ENCODE measurements at regions of chr6 and their contacts with region 1.

Region 1: DNA sequence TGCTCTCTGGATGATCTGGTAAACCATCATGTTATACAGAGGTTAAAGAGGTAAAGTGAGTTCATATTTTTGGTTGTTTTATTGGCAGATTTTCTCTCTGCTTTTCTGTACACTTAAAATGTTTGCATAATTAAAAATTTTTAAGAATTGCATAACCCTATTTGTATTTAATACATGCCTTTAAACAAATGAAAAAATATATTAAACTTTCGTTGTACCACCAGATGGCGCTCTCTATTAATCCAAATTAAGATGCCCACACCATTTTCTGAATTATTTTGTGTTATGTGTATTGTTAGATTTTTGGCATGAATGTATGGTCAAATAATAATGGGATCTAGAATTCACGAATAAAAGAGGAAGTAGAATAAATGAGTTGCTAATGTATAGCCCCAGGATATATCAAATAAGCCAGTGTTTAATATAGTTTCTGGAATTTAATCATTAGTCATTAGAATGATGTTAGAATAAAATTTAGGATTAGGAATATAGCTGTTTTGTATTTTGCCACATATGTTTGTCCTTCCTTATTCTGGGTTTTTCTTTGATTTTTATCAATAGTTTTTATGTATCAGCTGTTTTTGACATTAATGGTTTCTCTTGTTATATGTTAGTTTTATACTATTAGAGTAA is 38.9 kb downstream of the SMAP1 start:
- DNase-seq: no peak
- H3K4me3 ChIP-seq: no peak overlapping the region
- H3K27ac ChIP-seq: no peak overlapping the region
- H3K4me1 ChIP-seq: no peaks in the 10 kb centered on the region
- H3K27me3 ChIP-seq: no peaks in the 10 kb centered on the region
- CTCF ChIP-seq: peak in 3 of 4 experiments; percentile 67 to 77 (median 70)
- POLR2A ChIP-seq: no peak

Region 2: GRCh38 chr6:70633870-70634269 is 72.7 kb before region 1 on chr6:
- intact Hi-C with region 1: no loop called
- DNase-seq: no peak
- H3K4me3 ChIP-seq: no peak overlapping the region
- H3K27ac ChIP-seq: no peak overlapping the region
- H3K4me1 ChIP-seq: no peaks in the 10 kb centered on the region
- H3K27me3 ChIP-seq: no peaks in the 10 kb centered on the region
- CTCF ChIP-seq: no peak
- POLR2A ChIP-seq: no peak

Region 3: GRCh38 chr6:70884074-70884983 is 177.7 kb after region 1 on chr6:
- intact Hi-C with region 1: loop called (anchors 2 kb)
- DNase-seq: peak; percentile 54
- H3K4me3 ChIP-seq: no peak overlapping the region
- H3K27ac ChIP-seq: no peak overlapping the region
- H3K4me1 ChIP-seq: no peaks in the 10 kb centered on the region
- H3K27me3 ChIP-seq: no peaks in the 10 kb centered on the region
- CTCF ChIP-seq: peak; percentile 79 to 96 (median 88)
- POLR2A ChIP-seq: no peak

Region 4: DNA sequence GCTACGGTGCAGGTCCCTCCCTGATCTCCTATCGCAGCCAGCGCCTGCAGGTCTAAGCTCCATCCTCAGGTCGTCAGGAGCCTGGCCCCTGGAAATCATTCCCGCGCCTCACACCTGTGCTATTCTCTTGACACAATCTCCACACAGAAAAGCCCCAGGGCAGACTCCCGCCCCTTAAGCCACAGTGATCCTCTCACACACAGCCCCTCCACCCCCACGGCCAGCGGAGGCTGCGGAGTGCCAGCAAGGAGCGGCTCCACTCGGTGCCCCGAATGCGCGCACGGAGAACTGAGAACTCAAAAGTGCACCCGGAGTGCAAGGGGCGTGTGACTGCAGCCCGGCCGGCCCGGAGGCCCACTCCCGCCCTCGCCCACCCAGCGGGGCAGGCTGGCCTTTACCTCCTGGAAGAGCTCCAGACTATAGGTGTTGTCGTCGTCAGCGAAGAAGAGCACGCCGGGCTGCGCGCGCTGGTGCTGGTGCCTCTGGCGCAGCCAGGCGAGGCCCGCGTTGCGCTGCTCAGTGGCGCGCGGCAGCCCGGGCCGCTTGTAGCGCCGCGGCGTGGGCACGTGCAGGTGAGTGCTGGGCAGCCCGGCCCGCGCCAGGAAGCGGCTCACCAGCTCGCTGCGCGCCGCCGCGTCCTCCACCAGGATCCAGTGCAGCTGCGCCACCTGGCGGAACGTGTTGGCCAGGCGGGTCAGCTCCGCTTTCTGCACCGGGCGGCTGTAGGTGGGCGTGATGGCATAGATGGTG is 249.0 kb after region 1 on chr6:
- intact Hi-C with region 1: loop called (anchors 5 kb)
- DNase-seq: peak; percentile 83
- H3K4me3 ChIP-seq: peak overlapping the region; percentile 31 to 44
- H3K27ac ChIP-seq: no peak overlapping the region
- H3K4me1 ChIP-seq: peaks cover 5% of the 10 kb centered on the region
- H3K27me3 ChIP-seq: no peaks in the 10 kb centered on the region
- CTCF ChIP-seq: peak; percentile 80 to 87 (median 84)
- POLR2A ChIP-seq: peak; percentile 12

Measured in prostate gland (tissue), 2 donors.